Activated CD8-positive, alpha-beta T cell treated with anti-CD3 and anti-CD28 coated beads for 36 hours (primary cell): ENCODE measurements at regions of chr6 and their contacts with region 1.

Region 1: GRCh38 chr6:134640975-134641429 is 308.9 kb downstream of the ALDH8A1 start:
- DNase-seq: peak; percentile 86
- ATAC-seq: peak; percentile 94
- H3K4me3 Mint-ChIP-seq: no peak overlapping the region
- H3K27ac Mint-ChIP-seq: no peak overlapping the region
- H3K4me1 Mint-ChIP-seq: peaks cover 15% of the 10 kb centered on the region
- H3K27me3 Mint-ChIP-seq: no peaks in the 10 kb centered on the region
- CTCF ChIP-seq: peak; percentile 94

Region 2: GRCh38 chr6:134161036-134161435 is 480.0 kb before region 1 on chr6:
- CTCF ChIA-PET with region 1: interaction called, 25 read pairs
- POLR2A ChIA-PET with region 1: no interaction called
- intact Hi-C with region 1: no loop called
- DNase-seq: no peak
- ATAC-seq: no peak
- H3K4me3 Mint-ChIP-seq: no peak overlapping the region
- H3K27ac Mint-ChIP-seq: no peak overlapping the region
- H3K4me1 Mint-ChIP-seq: no peaks in the 10 kb centered on the region
- H3K27me3 Mint-ChIP-seq: no peaks in the 10 kb centered on the region
- CTCF ChIP-seq: no peak

Region 3: DNA sequence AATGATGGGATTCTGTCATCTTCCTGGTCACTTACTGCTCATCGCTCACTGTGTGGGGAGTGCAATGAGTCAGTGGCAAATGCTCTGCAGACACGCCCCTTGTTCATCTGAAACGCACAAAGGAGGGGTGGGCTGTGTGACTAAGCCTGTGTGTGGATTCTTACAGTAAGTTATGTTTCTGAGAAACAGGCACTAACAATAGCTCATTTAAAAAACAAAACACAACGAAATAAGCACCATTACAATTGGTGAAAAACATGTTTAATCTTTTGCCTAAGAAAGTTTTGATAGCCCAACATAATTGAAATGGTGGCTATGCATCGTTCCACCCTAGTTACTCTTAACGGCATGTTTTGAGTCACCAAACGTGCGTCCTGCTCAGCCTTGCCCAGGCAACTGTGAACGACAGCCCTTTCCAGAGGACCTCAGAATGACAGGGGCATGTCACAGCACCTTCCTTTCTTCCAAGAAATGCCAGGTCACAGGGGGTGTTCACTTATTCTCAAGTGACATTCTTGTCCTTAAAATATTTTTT is 204.7 kb before region 1 on chr6:
- CTCF ChIA-PET with region 1: interaction called, 19 read pairs
- POLR2A ChIA-PET with region 1: no interaction called
- intact Hi-C with region 1: no loop called
- DNase-seq: peak; percentile 87
- ATAC-seq: peak; percentile 91
- H3K4me3 Mint-ChIP-seq: peak overlapping the region; percentile 60
- H3K27ac Mint-ChIP-seq: peak overlapping the region; percentile 88
- H3K4me1 Mint-ChIP-seq: peaks cover 29% of the 10 kb centered on the region
- H3K27me3 Mint-ChIP-seq: no peaks in the 10 kb centered on the region
- CTCF ChIP-seq: no peak

Region 4: GRCh38 chr6:134949927-134950326 is 308.9 kb after region 1 on chr6 and contains the start of gene ALDH8A1:
- CTCF ChIA-PET with region 1: no interaction called
- POLR2A ChIA-PET with region 1: no interaction called
- intact Hi-C with region 1: loop called (anchors 10 kb)
- DNase-seq: no peak
- ATAC-seq: no peak
- H3K4me3 Mint-ChIP-seq: no peak within 1 kb of the TSS
- H3K27ac Mint-ChIP-seq: no peak within 1 kb of the TSS
- H3K4me1 Mint-ChIP-seq: no peaks in the 10 kb centered on the region
- H3K27me3 Mint-ChIP-seq: no peaks in the 10 kb centered on the region
- CTCF ChIP-seq: no peak
- total RNA-seq, gene ALDH8A1: 1.2 to 1.6 TPM